Heart left ventricle (tissue), 16 donors: ENCODE measurements at regions of chr17 and their contacts with region 1.

Region 1: GRCh38 chr17:73255671-73256181 is 6.0 kb downstream of the CPSF4L start:
- DNase-seq: peak in 3 of 5 donors; percentile 37 to 75 (median 54)
- ATAC-seq: peak; percentile 59 to 79 (median 68)
- H3K4me3 ChIP-seq: no peak overlapping the region
- H3K27ac ChIP-seq: no peak overlapping the region
- H3K4me1 ChIP-seq: peaks cover 0 to 9% (median 0%) of the 10 kb centered on the region in 12 donors
- H3K27me3 ChIP-seq: no peaks in the 10 kb centered on the region
- CTCF ChIP-seq: peak; percentile 93 to 100 (median 98)
- POLR2A ChIP-seq: no peak

Region 2: GRCh38 chr17:72556944-72557826 is 698.5 kb before region 1 on chr17:
- intact Hi-C with region 1: loop called in 1 of 10 experiments (anchors 10 kb)
- DNase-seq: peak in 4 of 5 donors; percentile 27 to 57 (median 40)
- ATAC-seq: peak in 3 of 4 donors; percentile 46 to 74 (median 63)
- H3K4me3 ChIP-seq: no peak overlapping the region
- H3K27ac ChIP-seq: no peak overlapping the region
- H3K4me1 ChIP-seq: no peaks in the 10 kb centered on the region
- H3K27me3 ChIP-seq: peaks cover 0 to 16% (median 0%) of the 10 kb centered on the region in 9 donors
- CTCF ChIP-seq: peak; percentile 49 to 85 (median 74)
- POLR2A ChIP-seq: no peak

Region 3: GRCh38 chr17:73196500-73196899 is 59.2 kb before region 1 on chr17:
- intact Hi-C with region 1: no loop called
- DNase-seq: peak in 1 of 5 donors; percentile 23
- ATAC-seq: no peak
- H3K4me3 ChIP-seq: no peak overlapping the region
- H3K27ac ChIP-seq: no peak overlapping the region
- H3K4me1 ChIP-seq: peaks cover 0 to 25% (median 16%) of the 10 kb centered on the region in 12 donors
- H3K27me3 ChIP-seq: no peaks in the 10 kb centered on the region
- CTCF ChIP-seq: peak in 6 of 12 donors; percentile 7 to 50 (median 22)
- POLR2A ChIP-seq: no peak

Region 4: DNA sequence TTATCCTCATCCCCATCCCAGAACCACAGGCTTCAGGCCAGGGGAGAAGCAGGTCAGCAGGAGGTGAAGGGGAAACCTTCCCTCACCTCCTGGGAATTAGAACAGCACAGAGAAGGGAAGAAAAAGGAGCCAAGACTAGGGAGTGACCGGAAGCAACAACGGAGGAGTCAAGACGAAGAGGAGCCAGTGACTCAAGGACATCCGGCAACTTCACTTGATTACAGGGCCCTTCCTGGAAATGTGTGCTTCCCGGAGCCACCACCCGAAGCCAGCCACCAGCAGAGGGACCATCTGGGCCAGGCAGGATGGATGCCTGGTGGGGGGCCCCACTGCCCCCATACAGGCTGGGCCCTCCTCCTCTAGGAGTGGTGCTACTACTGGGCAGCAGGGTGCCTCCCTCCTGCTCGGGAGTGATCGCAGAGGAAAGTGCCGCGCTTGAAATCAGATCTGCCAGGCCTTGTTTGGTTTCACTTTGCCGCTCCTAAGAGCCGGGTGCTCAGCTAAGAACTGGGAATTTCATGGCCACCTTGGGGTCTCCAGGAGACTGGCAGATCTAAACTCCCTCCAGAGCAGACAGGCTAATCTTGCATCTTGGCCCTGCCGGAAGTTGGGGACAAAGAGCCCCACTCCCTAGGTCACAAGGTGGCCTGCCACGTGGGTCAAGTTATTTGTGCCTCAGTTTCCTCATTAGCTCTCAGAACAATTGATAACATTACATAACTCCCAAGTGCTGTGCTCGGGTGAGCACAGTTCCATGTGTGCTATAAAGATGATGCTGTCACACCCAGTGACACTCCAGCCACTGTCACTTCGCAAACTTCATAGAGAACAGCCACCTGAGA is 49.5 kb after region 1 on chr17:
- intact Hi-C with region 1: loop called in 3 of 10 experiments (anchors 2 to 10 kb)
- DNase-seq: peak; percentile 79 to 90 (median 81)
- ATAC-seq: peak; percentile 32 to 84 (median 70)
- H3K4me3 ChIP-seq: peak overlapping the region in 11 of 12 donors; percentile 2 to 49 (median 44)
- H3K27ac ChIP-seq: peak overlapping the region; percentile 69 to 100 (median 98)
- H3K4me1 ChIP-seq: peaks cover 39 to 97% (median 80%) of the 10 kb centered on the region in 12 donors
- H3K27me3 ChIP-seq: no peaks in the 10 kb centered on the region
- CTCF ChIP-seq: peak in 10 of 12 donors; percentile 10 to 62 (median 43)
- POLR2A ChIP-seq: peak in 1 of 2 donors; percentile 14

Region 5: GRCh38 chr17:73311781-73312641 is 56.3 kb after region 1 on chr17 and contains the start of gene CDC42EP4:
- intact Hi-C with region 1: loop called in 4 of 10 experiments (anchors 2 to 10 kb)
- DNase-seq: peak; percentile 97 to 98 (median 98)
- ATAC-seq: peak; percentile 91 to 95 (median 92)
- H3K4me3 ChIP-seq: peak within 1 kb of the TSS; percentile 87 to 100 (median 94)
- H3K27ac ChIP-seq: peak within 1 kb of the TSS; percentile 94 to 100 (median 98)
- H3K4me1 ChIP-seq: peaks cover 6 to 46% (median 36%) of the 10 kb centered on the region in 12 donors
- H3K27me3 ChIP-seq: no peaks in the 10 kb centered on the region
- CTCF ChIP-seq: no peak
- POLR2A ChIP-seq: peak; percentile 96 to 100
- total RNA-seq, gene CDC42EP4: 21.8 to 103 (median 37.5) TPM

Region 6: GRCh38 chr17:73316919-73317505 is 61.3 kb after region 1 on chr17:
- intact Hi-C with region 1: loop called in 2 of 10 experiments (anchors 5 to 10 kb)
- DNase-seq: peak in 1 of 5 donors; percentile 45
- ATAC-seq: peak in 3 of 4 donors; percentile 7 to 16 (median 12)
- H3K4me3 ChIP-seq: no peak overlapping the region
- H3K27ac ChIP-seq: peak overlapping the region in 4 of 12 donors; percentile 20 to 59 (median 39)
- H3K4me1 ChIP-seq: peaks cover 0 to 32% (median 12%) of the 10 kb centered on the region in 12 donors
- H3K27me3 ChIP-seq: no peaks in the 10 kb centered on the region
- CTCF ChIP-seq: no peak
- POLR2A ChIP-seq: no peak

Region 7: DNA sequence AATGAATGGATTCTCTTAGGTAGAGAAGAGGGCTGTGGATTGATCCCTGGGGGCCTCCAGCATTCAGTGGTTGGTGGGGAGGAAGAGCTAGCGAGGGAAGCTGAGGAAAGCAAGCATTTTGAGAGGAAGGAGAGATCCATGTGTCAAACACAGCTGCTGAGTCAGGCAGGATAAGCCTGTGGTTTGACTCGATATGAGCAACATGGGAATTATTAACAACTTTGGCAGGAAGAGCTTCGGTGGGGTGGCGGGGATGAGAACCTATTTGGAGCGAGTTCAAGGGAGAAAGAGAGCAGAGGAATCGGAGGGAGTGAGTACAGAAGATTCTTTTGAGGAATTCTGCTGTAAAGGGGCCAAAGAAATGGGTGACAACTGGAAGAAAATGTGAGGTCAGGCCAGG is 115.6 kb after region 1 on chr17:
- intact Hi-C with region 1: loop called (anchors 1 to 2 kb)
- DNase-seq: no peak
- ATAC-seq: no peak
- H3K4me3 ChIP-seq: no peak overlapping the region
- H3K27ac ChIP-seq: no peak overlapping the region
- H3K4me1 ChIP-seq: peaks cover 0 to 17% (median 6%) of the 10 kb centered on the region in 12 donors
- H3K27me3 ChIP-seq: no peaks in the 10 kb centered on the region
- CTCF ChIP-seq: no peak
- POLR2A ChIP-seq: no peak

Region 8: GRCh38 chr17:74176546-74177001 is 920.8 kb after region 1 on chr17:
- intact Hi-C with region 1: loop called in 1 of 10 experiments (anchors 10 kb)
- DNase-seq: peak in 4 of 5 donors; percentile 28 to 51 (median 42)
- ATAC-seq: peak; percentile 72 to 94 (median 82)
- H3K4me3 ChIP-seq: no peak overlapping the region
- H3K27ac ChIP-seq: no peak overlapping the region
- H3K4me1 ChIP-seq: no peaks in the 10 kb centered on the region
- H3K27me3 ChIP-seq: peaks cover 0 to 68% (median 15%) of the 10 kb centered on the region in 9 donors
- CTCF ChIP-seq: peak; percentile 66 to 89 (median 76)
- POLR2A ChIP-seq: no peak